GM12878 (cell line): ENCODE measurements at regions of chr6 and their contacts with region 1.

Region 1: GRCh38 chr6:64330694-64331307 is 695.2 kb downstream of the PHF3 start:
- DNase-seq: peak; percentile 11
- ATAC-seq: peak; percentile 88
- H3K4me3 ChIP-seq: no peak overlapping the region
- H3K27ac ChIP-seq: no peak overlapping the region
- H3K4me1 ChIP-seq: no peaks in the 10 kb centered on the region
- H3K27me3 ChIP-seq: no peaks in the 10 kb centered on the region
- CTCF ChIP-seq: peak; percentile 68 to 79 (median 71)
- EP300 ChIP-seq: no peak
- POLR2A ChIP-seq: no peak
- RAD21 ChIP-seq: peak; percentile 82

Region 2: GRCh38 chr6:63740709-63741108 is 590.1 kb before region 1 on chr6:
- CTCF ChIA-PET with region 1: no interaction called
- POLR2A ChIA-PET with region 1: no interaction called
- RAD21 ChIA-PET with region 1: no interaction called
- SMC1A ChIA-PET with region 1: no interaction called
- in situ Hi-C with region 1: no loop called
- intact Hi-C with region 1: no loop called
- DNase-seq: no peak
- ATAC-seq: no peak
- H3K4me3 ChIP-seq: no peak overlapping the region
- H3K27ac ChIP-seq: no peak overlapping the region
- H3K4me1 ChIP-seq: no peaks in the 10 kb centered on the region
- H3K27me3 ChIP-seq: no peaks in the 10 kb centered on the region
- CTCF ChIP-seq: no peak
- EP300 ChIP-seq: no peak
- POLR2A ChIP-seq: no peak
- RAD21 ChIP-seq: no peak

Region 3: GRCh38 chr6:63923139-63923739 is 407.6 kb before region 1 on chr6:
- CTCF ChIA-PET with region 1: interaction called, 44 read pairs
- POLR2A ChIA-PET with region 1: no interaction called
- RAD21 ChIA-PET with region 1: interaction called, 22 read pairs
- SMC1A ChIA-PET with region 1: interaction called, 43 read pairs
- in situ Hi-C with region 1: loop called (anchors 5 kb)
- intact Hi-C with region 1: loop called (anchors 1 kb)
- DNase-seq: no peak
- ATAC-seq: peak; percentile 72
- H3K4me3 ChIP-seq: no peak overlapping the region
- H3K27ac ChIP-seq: no peak overlapping the region
- H3K4me1 ChIP-seq: no peaks in the 10 kb centered on the region
- H3K27me3 ChIP-seq: no peaks in the 10 kb centered on the region
- CTCF ChIP-seq: peak; percentile 44 to 71 (median 46); a peak in 5 of 6 replicates
- EP300 ChIP-seq: no peak
- POLR2A ChIP-seq: no peak
- RAD21 ChIP-seq: peak; percentile 75

Region 4: DNA sequence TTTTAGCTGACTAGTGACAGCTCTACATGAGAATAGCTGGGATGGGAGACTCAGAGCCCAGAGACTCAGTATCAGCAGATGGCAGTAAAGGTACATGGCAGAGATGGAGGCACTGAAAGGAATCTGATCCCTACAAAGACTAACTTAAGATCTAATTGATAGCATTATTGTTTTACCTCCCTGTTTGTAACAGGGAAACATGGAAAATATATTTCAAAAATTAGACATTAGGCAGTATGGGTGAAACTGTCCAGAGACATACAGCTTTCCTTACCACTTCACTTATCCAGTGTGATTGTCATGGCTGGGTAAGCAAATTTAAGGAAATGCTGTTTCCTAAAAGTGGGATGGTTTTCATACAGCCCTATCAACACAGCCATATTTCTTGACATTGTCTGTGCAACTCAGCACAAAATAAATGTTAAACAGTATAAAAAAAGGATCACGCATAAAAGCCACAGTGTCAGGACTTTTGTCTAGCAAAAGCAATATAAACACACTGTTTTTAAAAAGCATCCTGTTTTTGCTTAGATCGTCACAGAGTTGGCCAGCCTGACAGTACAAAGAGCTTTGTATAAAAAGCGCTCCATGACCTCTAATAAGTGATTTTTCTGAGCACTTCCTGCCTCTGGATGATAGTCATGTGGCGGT is 318.3 kb before region 1 on chr6:
- CTCF ChIA-PET with region 1: interaction called, 102 read pairs
- POLR2A ChIA-PET with region 1: no interaction called
- RAD21 ChIA-PET with region 1: interaction called, 89 read pairs
- SMC1A ChIA-PET with region 1: interaction called, 67 read pairs
- in situ Hi-C with region 1: loop called (anchors 5 kb)
- intact Hi-C with region 1: loop called (anchors 1 kb)
- DNase-seq: no peak
- ATAC-seq: peak; percentile 92
- H3K4me3 ChIP-seq: no peak overlapping the region
- H3K27ac ChIP-seq: no peak overlapping the region
- H3K4me1 ChIP-seq: no peaks in the 10 kb centered on the region
- H3K27me3 ChIP-seq: no peaks in the 10 kb centered on the region
- CTCF ChIP-seq: peak; percentile 45 to 85 (median 72); a peak in 4 of 6 replicates
- EP300 ChIP-seq: no peak
- POLR2A ChIP-seq: no peak
- RAD21 ChIP-seq: peak; percentile 93